Transverse colon (tissue), 4 donors: ENCODE measurements at regions of chr6 and their contacts with region 1.

Region 1: DNA sequence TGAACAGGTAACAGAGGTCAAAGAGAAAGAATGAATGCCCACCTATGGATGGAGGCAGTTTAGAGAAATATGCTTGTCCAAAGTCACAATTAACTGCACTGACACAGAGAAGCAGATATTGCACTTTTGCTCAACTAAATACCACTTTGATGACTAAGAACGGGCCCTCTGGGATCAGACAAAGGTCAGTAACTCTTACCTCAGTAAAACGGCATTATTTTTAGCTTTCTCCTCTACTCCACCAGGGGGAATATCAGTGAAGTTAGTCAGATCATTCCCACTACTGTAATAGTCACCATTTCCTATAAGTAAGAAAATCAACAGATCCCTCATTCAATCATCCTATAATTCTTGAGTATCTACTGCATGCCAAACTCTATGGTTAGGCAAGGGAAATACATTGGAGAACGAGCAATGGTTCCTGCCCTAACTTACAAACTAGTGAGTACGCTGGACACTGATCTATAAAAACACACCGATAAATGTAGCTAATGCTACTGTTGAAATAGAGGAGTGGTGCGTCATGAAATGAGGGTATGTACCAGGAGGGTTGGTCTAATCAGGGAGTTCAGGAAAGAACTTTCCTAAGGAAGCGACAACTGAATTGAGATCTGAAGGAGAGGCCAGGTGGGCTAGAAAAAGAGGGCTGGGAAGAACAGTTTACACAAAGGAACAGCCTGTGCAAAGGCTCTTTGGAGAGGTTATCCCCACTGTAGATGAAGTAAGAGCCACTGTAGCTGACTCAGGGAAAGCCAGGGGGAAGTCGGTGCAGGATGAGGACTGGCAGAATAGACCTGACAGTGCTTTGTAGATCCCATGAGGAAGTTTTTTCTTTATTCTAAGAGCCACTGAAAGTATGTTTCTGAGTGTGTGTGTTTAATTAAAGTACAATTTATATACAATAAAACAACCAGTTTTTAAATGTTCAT is 9.2 kb downstream of the ECI2 start:
- DNase-seq: no peak
- H3K4me3 ChIP-seq: no peak overlapping the region
- H3K27ac ChIP-seq: no peak overlapping the region
- H3K4me1 ChIP-seq: peaks cover 0 to 7% (median 2%) of the 10 kb centered on the region in 4 donors
- H3K27me3 ChIP-seq: no peaks in the 10 kb centered on the region
- CTCF ChIP-seq: no peak
- EP300 ChIP-seq: no peak
- POLR2A ChIP-seq: no peak

Region 2: GRCh38 chr6:3421791-3422434 is 704.3 kb before region 1 on chr6:
- in situ Hi-C with region 1: no loop called
- intact Hi-C with region 1: no loop called
- DNase-seq: no peak
- H3K4me3 ChIP-seq: no peak overlapping the region
- H3K27ac ChIP-seq: no peak overlapping the region
- H3K4me1 ChIP-seq: peaks cover 0 to 24% (median 2%) of the 10 kb centered on the region in 4 donors
- H3K27me3 ChIP-seq: no peaks in the 10 kb centered on the region
- CTCF ChIP-seq: no peak
- EP300 ChIP-seq: no peak
- POLR2A ChIP-seq: no peak

Region 3: GRCh38 chr6:3719462-3720308 is 406.5 kb before region 1 on chr6:
- in situ Hi-C with region 1: no loop called
- intact Hi-C with region 1: no loop called
- DNase-seq: no peak
- H3K4me3 ChIP-seq: no peak overlapping the region
- H3K27ac ChIP-seq: no peak overlapping the region
- H3K4me1 ChIP-seq: peaks cover 0 to 8% (median 4%) of the 10 kb centered on the region in 4 donors
- H3K27me3 ChIP-seq: no peaks in the 10 kb centered on the region
- CTCF ChIP-seq: no peak
- EP300 ChIP-seq: no peak
- POLR2A ChIP-seq: no peak

Region 4: DNA sequence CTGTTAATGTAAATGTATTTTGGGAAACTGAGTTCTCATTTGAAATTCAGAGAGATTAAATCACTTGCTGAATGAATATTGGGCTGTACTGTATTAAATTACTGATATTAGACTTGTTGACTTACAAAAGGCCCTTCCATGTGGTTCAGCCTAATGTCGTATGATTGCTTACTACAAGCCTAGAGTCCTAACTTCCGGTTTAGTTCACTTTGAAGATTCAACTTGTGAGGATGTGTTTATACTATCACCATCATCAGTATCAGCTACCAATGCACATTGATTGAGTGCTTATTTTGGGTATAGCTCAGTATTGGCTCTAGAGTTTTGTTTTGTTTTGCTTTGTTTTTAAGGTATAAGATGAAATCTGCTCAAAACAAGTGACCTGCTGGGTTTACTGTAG is 95.5 kb before region 1 on chr6:
- in situ Hi-C with region 1: no loop called
- intact Hi-C with region 1: loop called (anchors 10 kb)
- DNase-seq: no peak
- H3K4me3 ChIP-seq: no peak overlapping the region
- H3K27ac ChIP-seq: no peak overlapping the region
- H3K4me1 ChIP-seq: peaks cover 0 to 53% (median 11%) of the 10 kb centered on the region in 4 donors
- H3K27me3 ChIP-seq: no peaks in the 10 kb centered on the region
- CTCF ChIP-seq: no peak
- EP300 ChIP-seq: no peak
- POLR2A ChIP-seq: no peak